ENCODE measurements at regions of chr19 and their contacts with region 1.

Region 1: GRCh38 chr19:54209811-54210494 is 9.3 kb downstream of the RPS9 start:
- DNase-seq: peak; percentile 62
- H3K4me3 Mint-ChIP-seq: peak overlapping the region; percentile 66
- H3K27ac Mint-ChIP-seq: peak overlapping the region; percentile 90
- H3K4me1 Mint-ChIP-seq: peaks cover 58% of the 10 kb centered on the region
- H3K27me3 Mint-ChIP-seq: no peaks in the 10 kb centered on the region

Region 2: DNA sequence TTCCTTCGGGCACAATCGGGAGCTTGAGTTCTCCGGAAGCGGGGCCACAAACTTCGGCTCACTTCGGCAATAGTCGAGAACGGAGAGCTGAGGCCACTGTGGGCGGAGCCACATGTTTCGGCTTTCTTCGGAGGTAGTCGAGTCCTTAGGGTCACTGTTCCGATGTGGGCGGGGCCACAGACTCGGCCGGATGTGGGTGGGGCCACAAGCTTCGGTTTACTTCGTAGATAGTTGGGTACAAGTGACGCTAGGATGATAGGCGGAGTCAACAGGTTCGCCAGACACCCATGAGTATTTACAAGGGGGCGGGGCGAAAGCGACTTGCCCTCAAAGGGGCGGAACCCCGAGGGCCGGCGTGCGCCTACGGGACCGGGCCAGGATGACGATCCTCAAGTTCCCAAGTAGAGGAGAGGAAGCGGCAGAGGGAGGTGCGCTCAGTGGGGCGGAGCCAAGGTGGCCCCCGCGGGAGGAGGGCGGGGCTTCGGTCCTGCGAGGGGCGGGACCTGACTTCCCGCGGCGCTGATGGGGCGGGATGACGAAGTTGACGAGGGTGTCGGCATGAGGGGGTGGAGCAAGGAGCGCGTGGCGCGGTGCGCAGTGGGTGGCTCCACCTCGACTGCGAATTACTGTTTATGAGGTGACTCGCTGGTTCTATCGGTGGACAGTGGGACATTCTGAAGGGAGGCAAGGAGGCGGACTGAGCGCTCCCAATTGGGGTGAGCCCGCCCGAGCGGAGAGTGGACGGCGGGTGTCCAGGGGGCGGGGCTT is 20.0 kb before region 1 on chr19:
- intact Hi-C with region 1: loop called (anchors 1 kb)
- DNase-seq: peak; percentile 100
- H3K4me3 Mint-ChIP-seq: peak overlapping the region; percentile 85
- H3K27ac Mint-ChIP-seq: peak overlapping the region; percentile 98
- H3K4me1 Mint-ChIP-seq: peaks cover 28% of the 10 kb centered on the region
- H3K27me3 Mint-ChIP-seq: no peaks in the 10 kb centered on the region

Region 3: GRCh38 chr19:54231077-54231931 is 21.4 kb after region 1 on chr19:
- intact Hi-C with region 1: loop called (anchors 1 kb)
- DNase-seq: peak; percentile 96
- H3K4me3 Mint-ChIP-seq: no peak overlapping the region
- H3K27ac Mint-ChIP-seq: no peak overlapping the region
- H3K4me1 Mint-ChIP-seq: peaks cover 10% of the 10 kb centered on the region
- H3K27me3 Mint-ChIP-seq: peaks cover 51% of the 10 kb centered on the region

Region 4: DNA sequence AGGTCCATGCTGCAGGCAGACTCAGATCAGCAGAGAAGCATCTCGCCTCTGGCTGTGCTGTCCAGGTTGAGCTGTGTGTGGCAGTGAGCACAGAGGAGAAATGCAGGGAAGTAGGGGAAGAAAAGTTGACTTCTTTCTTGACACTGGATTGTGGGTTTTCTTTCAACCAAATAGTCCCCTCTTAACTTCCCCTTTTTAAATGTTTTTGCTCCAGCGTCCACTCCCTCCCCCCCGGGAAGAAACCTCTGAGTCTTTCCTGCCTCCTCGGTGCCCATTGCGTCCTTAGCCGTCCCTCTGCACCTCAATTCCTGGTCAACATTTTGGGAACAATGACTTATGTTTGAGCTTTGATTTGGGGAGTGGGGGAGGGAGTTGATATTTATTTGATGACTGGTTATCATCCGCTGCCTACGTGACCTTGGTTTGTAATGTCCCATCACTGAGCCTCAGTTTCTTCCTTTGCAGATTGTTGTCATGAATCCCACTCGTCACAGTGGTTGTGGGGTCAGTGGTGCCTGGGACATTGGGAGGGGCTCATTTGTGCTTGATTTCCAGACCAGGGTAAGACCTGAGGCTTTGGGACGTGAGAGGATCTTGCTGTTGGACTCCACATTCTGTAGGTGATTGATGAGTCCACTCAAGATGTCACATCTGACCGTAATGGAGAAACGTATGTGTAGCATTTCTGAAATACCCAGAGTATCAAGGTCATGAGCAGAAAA is 71.2 kb after region 1 on chr19 and contains the start of gene LILRB2:
- intact Hi-C with region 1: no loop called
- DNase-seq: no peak
- H3K4me3 Mint-ChIP-seq: no peak within 1 kb of the TSS
- H3K27ac Mint-ChIP-seq: no peak within 1 kb of the TSS
- H3K4me1 Mint-ChIP-seq: peaks cover 3% of the 10 kb centered on the region
- H3K27me3 Mint-ChIP-seq: peaks cover 28% of the 10 kb centered on the region
- total RNA-seq, gene LILRB2: not detected in 2 replicates

Region 5: GRCh38 chr19:54448774-54449700 is 239.1 kb after region 1 on chr19 and contains the start of gene LENG8:
- intact Hi-C with region 1: loop called (anchors 10 kb)
- DNase-seq: peak; percentile 99
- H3K4me3 Mint-ChIP-seq: peak within 1 kb of the TSS; percentile 96
- H3K27ac Mint-ChIP-seq: peak within 1 kb of the TSS; percentile 100
- H3K4me1 Mint-ChIP-seq: peaks cover 31% of the 10 kb centered on the region
- H3K27me3 Mint-ChIP-seq: peaks cover 2% of the 10 kb centered on the region
- total RNA-seq, gene LENG8: 202 and 214 TPM in 2 replicates

Region 6: GRCh38 chr19:54517483-54517882 is 307.5 kb after region 1 on chr19:
- intact Hi-C with region 1: loop called (anchors 5 kb)
- DNase-seq: peak; percentile 92
- H3K4me3 Mint-ChIP-seq: no peak overlapping the region
- H3K27ac Mint-ChIP-seq: peak overlapping the region; percentile 62
- H3K4me1 Mint-ChIP-seq: peaks cover 42% of the 10 kb centered on the region
- H3K27me3 Mint-ChIP-seq: peaks cover 3% of the 10 kb centered on the region

Measured in activated CD4-positive, alpha-beta T cell treated with anti-CD3 and anti-CD28 coated beads, Interleukin-2, amount 10 ng/mL, durations not matched to agents 24 days and 14 days (primary cell).